H1 (cell line): ENCODE measurements at regions of chr1 and their contacts with region 1.

Region 1: GRCh38 chr1:174902531-174903099 is 97.1 kb upstream of the CACYBP start:
- DNase-seq: no peak
- H3K4me3 ChIP-seq: no peak overlapping the region
- H3K27ac ChIP-seq: no peak overlapping the region; the same call in 1 of the 2 replicates
- H3K4me1 ChIP-seq: peaks cover 0 to 14% (median 0%) of the 10 kb centered on the region in 4 experiments; a peak in 4 of 7 replicates
- H3K27me3 ChIP-seq: no peaks in the 10 kb centered on the region
- CTCF ChIP-seq: no peak
- EP300 ChIP-seq: no peak
- POLR2A ChIP-seq: no peak
- RAD21 ChIP-seq: no peak

Region 2: GRCh38 chr1:174747613-174748012 is 155.0 kb before region 1 on chr1:
- CTCF ChIA-PET with region 1: no interaction called
- POLR2A ChIA-PET with region 1: no interaction called
- DNase-seq: no peak
- H3K4me3 ChIP-seq: no peak overlapping the region
- H3K27ac ChIP-seq: no peak overlapping the region
- H3K4me1 ChIP-seq: 0 out of 7 replicates have a peak, but pooled peaks cover 0 to 2% (median 0%) of the 10 kb centered on the region in 4 experiments
- H3K27me3 ChIP-seq: no peaks in the 10 kb centered on the region
- CTCF ChIP-seq: no peak
- EP300 ChIP-seq: no peak
- POLR2A ChIP-seq: no peak
- RAD21 ChIP-seq: no peak; a peak in 2 of 4 replicates

Region 3: DNA sequence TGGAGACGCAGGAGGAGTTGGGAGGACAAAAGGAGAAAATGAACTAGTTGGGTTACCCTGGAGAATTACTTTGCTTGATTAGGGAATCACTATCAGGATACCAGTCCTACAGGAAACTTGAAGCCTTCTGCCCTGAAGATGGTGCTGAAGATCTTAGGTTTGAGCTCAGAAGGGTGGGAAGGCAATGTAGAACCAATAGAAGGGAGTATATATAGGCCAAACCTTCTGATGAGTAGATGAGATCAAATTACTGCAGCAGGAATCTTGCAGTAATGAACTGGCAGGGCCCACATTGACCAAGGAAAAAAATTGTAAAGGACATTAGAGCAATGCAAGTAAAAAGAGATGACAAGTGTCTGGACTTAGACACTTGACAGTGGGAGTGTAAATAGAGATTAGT is 19.2 kb before region 1 on chr1:
- CTCF ChIA-PET with region 1: interaction called, 5 read pairs
- POLR2A ChIA-PET with region 1: interaction called, 49 read pairs
- DNase-seq: no peak
- H3K4me3 ChIP-seq: no peak overlapping the region
- H3K27ac ChIP-seq: no peak overlapping the region
- H3K4me1 ChIP-seq: peaks cover 0 to 6% (median 2%) of the 10 kb centered on the region in 4 experiments; a peak in 2 of 7 replicates
- H3K27me3 ChIP-seq: no peaks in the 10 kb centered on the region
- CTCF ChIP-seq: peak in 1 of 3 experiments; percentile 25; a peak in 1 of 4 replicates
- EP300 ChIP-seq: no peak
- POLR2A ChIP-seq: no peak
- RAD21 ChIP-seq: peak; percentile 46 to 60

Region 4: GRCh38 chr1:174892016-174892415 is 10.6 kb before region 1 on chr1:
- CTCF ChIA-PET with region 1: interaction called, 5 read pairs
- POLR2A ChIA-PET with region 1: interaction called, 49 read pairs
- DNase-seq: no peak
- H3K4me3 ChIP-seq: no peak overlapping the region
- H3K27ac ChIP-seq: no peak overlapping the region
- H3K4me1 ChIP-seq: no peaks in the 10 kb centered on the region
- H3K27me3 ChIP-seq: no peaks in the 10 kb centered on the region
- CTCF ChIP-seq: no peak
- EP300 ChIP-seq: no peak
- POLR2A ChIP-seq: no peak
- RAD21 ChIP-seq: no peak

Region 5: GRCh38 chr1:175015243-175015642 is 112.6 kb after region 1 on chr1:
- CTCF ChIA-PET with region 1: no interaction called
- POLR2A ChIA-PET with region 1: no interaction called
- DNase-seq: no peak
- H3K4me3 ChIP-seq: no peak overlapping the region
- H3K27ac ChIP-seq: no peak overlapping the region
- H3K4me1 ChIP-seq: no peaks in the 10 kb centered on the region
- H3K27me3 ChIP-seq: no peaks in the 10 kb centered on the region
- CTCF ChIP-seq: no peak
- EP300 ChIP-seq: no peak
- POLR2A ChIP-seq: no peak
- RAD21 ChIP-seq: no peak